ENCODE measurements at regions of chr5 and their contacts with region 1.

Region 1: DNA sequence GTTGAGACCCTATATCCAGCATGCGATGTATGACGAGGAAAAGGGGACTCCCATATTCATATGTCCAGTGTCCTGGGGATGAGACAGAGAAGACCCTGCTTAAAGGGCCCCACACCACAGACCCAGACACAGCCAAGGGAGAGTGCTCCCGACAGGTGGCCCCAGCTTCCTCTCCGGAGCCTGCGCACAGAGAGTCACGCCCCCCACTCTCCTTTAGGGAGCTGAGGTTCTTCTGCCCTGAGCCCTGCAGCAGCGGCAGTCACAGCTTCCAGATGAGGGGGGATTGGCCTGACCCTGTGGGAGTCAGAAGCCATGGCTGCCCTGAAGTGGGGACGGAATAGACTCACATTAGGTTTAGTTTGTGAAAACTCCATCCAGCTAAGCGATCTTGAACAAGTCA is 17.1 kb downstream of the BTNL3 start:
- H3K4me3 Mint-ChIP-seq: no peak overlapping the region
- H3K27ac Mint-ChIP-seq: no peak overlapping the region
- H3K4me1 Mint-ChIP-seq: peaks cover 7% of the 10 kb centered on the region
- H3K27me3 Mint-ChIP-seq: peaks cover 5% of the 10 kb centered on the region

Region 2: GRCh38 chr5:180950291-180950949 is 55.4 kb before region 1 on chr5:
- intact Hi-C with region 1: loop called (anchors 2 kb)
- H3K4me3 Mint-ChIP-seq: no peak overlapping the region
- H3K27ac Mint-ChIP-seq: no peak overlapping the region
- H3K4me1 Mint-ChIP-seq: no peaks in the 10 kb centered on the region
- H3K27me3 Mint-ChIP-seq: peaks cover 4% of the 10 kb centered on the region